WTC11 (cell line): ENCODE measurements at regions of chr9 and their contacts with region 1.

Region 1: DNA sequence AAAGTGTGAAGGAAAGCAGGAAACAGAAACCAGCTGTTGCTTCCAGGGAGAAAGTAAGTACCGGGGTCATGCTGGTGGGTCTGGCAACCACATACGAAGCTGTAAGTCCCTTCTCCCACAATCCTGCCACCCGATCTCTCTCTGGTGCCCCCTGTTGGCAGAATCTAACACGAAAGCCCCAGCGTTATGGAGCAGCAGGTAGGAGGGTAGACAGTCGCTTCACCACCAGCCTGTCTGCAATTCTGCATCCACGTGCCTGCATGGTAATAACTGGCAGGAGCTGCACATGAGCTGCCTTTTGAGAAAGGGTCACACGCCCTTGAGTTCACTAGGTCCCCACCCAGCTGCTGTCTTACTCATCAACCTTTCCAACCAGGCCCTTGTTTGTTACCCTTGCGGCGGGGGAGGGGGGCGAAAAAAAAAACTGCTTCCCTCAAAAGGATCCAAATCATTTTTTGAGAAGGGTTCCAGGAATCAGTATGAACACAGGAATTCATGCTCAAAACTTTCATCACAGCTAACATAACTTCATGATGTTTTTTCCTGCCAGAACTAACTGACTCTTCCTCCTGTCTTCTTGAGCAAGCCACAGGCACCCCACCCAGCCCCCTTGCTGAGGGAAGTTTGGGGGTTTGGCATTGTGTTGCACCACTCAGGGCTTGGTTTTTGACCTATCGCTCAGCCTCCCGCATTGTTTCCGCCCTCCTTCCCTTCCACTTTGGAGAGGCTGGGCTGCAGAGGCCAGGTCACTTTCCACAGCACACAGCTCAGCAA is 19.6 kb upstream of the TMEM252 start:
- DNase-seq: peak; percentile 83
- ATAC-seq: peak; percentile 80
- H3K4me3 Mint-ChIP-seq: no peak overlapping the region
- H3K27ac Mint-ChIP-seq: no peak overlapping the region
- H3K4me1 Mint-ChIP-seq: peaks cover 32% of the 10 kb centered on the region
- H3K27me3 Mint-ChIP-seq: peaks cover 58% of the 10 kb centered on the region
- CTCF ChIP-seq: peak; percentile 66

Region 2: DNA sequence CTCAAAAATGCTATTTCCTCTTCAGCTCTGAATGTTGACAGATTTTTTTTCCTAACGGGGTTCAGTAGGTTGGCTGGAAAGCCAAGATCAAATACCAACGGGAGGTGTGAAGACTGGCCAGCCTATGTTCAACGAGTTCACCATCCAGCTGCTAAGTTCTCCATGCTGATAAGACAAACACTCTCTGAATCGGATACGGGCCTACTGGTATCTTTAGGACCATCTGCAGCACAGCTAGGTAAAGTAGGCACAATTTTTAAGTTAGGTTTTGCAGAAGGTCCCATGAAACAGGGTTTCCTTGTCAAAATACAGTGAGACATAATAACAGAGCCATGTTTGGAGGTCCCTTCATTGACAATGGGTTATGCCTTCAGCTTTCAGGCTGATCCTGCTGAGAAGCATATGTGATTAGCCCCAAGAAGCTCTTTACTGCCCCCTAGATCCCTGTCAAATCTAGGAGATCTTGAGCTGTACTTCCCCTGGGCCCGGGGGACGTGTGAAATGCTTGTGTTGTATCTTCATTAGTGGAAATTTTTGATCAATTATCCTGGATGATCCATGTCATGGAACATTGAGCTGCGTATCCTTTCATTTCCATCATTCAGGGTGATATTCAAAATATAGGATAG is 143.2 kb before region 1 on chr9:
- CTCF ChIA-PET with region 1: interaction called, 27 read pairs
- POLR2A ChIA-PET with region 1: no interaction called
- DNase-seq: peak; percentile 16
- ATAC-seq: peak; percentile 86
- H3K4me3 Mint-ChIP-seq: no peak overlapping the region
- H3K27ac Mint-ChIP-seq: no peak overlapping the region
- H3K4me1 Mint-ChIP-seq: peaks cover 4% of the 10 kb centered on the region; the same call in 1 of the 2 replicates
- H3K27me3 Mint-ChIP-seq: peaks cover 10% of the 10 kb centered on the region
- CTCF ChIP-seq: no peak

Region 3: GRCh38 chr9:68507130-68507805 is 53.0 kb before region 1 on chr9:
- CTCF ChIA-PET with region 1: interaction called, 16 read pairs
- POLR2A ChIA-PET with region 1: no interaction called
- DNase-seq: no peak
- ATAC-seq: no peak
- H3K4me3 Mint-ChIP-seq: no peak overlapping the region
- H3K27ac Mint-ChIP-seq: no peak overlapping the region
- H3K4me1 Mint-ChIP-seq: peaks cover 5% of the 10 kb centered on the region
- H3K27me3 Mint-ChIP-seq: peaks cover 100% of the 10 kb centered on the region
- CTCF ChIP-seq: peak; percentile 45; the same call in 1 of the 2 replicates

Region 4: DNA sequence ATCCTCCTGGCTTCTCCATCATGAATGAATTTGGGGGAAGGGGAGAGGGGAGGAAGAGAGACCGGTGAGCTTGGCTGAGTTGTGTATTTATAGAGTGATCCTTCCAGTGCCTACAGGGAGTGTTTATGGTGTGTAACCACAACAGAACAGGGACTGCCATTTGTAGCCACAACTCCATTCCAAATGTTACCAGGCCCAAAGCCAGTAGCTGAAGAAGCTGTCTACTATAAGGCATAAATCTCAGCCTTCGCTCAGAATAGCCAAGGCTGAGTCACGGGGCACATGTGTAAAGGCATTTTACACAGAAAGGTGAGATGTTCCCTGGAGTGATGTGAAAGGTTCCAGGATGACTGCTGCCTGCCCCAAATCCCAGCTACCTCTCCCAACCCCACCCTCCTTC is 22.1 kb before region 1 on chr9:
- CTCF ChIA-PET with region 1: interaction called, 17 read pairs
- POLR2A ChIA-PET with region 1: no interaction called
- DNase-seq: no peak
- ATAC-seq: no peak
- H3K4me3 Mint-ChIP-seq: no peak overlapping the region
- H3K27ac Mint-ChIP-seq: no peak overlapping the region
- H3K4me1 Mint-ChIP-seq: no peaks in the 10 kb centered on the region
- H3K27me3 Mint-ChIP-seq: peaks cover 63% of the 10 kb centered on the region
- CTCF ChIP-seq: no peak

Region 5: GRCh38 chr9:68574150-68574549 is 13.9 kb after region 1 on chr9:
- CTCF ChIA-PET with region 1: interaction called, 28 read pairs
- POLR2A ChIA-PET with region 1: no interaction called
- DNase-seq: no peak
- ATAC-seq: no peak
- H3K4me3 Mint-ChIP-seq: no peak overlapping the region
- H3K27ac Mint-ChIP-seq: no peak overlapping the region
- H3K4me1 Mint-ChIP-seq: no peaks in the 10 kb centered on the region; the same call in 1 of the 2 replicates
- H3K27me3 Mint-ChIP-seq: peaks cover 16% of the 10 kb centered on the region
- CTCF ChIP-seq: no peak

Region 6: GRCh38 chr9:68584189-68585033 is 24.2 kb after region 1 on chr9:
- CTCF ChIA-PET with region 1: interaction called, 12 read pairs
- POLR2A ChIA-PET with region 1: no interaction called
- DNase-seq: peak; percentile 82
- ATAC-seq: peak; percentile 93
- H3K4me3 Mint-ChIP-seq: peak overlapping the region; percentile 48
- H3K27ac Mint-ChIP-seq: peak overlapping the region; percentile 66; the same call in 1 of the 2 replicates
- H3K4me1 Mint-ChIP-seq: peaks cover 8% of the 10 kb centered on the region
- H3K27me3 Mint-ChIP-seq: peaks cover 4% of the 10 kb centered on the region
- CTCF ChIP-seq: peak; percentile 95